CD8-positive, alpha-beta memory T cell (primary cell): ENCODE measurements at regions of chr14 and their contacts with region 1.

Region 1: DNA sequence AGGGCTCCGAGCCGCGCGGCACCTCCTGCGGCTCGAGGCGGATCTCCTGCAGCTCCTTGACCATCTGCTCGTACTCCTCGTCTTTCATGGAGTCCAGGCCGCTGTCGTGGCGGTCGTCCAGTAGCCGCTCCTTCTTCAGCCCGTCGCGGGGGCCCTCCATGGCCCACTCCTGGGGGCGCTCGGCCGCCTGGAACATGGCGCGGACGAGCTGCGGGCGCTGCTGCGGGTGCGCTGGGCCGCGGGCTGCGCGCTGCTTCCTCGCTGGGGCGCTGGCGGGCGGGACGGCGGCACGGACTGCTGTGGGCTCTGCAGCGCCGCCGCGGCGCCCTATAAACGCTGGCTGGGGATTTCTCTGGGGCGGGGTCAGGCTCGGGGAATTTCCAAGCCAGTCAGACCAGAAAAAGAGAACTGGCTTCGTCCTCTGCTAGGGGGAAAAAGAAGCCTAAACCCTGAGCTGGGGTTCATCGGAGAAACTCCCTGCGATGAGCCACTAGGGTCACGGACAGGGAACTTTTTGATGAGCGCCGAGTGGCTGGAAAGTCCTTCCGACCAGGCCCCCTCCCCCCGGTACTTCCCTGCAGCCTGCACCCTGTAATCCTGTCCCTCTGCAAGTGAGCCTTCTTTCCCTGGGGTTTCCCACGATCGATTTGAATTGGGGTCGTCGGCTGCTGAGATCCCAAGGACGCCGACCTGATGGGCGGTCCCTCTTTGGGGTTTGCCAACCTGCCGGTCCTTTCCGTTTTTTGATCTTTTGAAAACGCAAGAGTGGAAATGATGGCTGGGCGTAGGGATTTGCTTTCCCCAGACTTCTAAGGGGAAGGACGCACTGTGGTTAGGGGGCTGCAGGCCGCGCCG is at the start of gene NFKBIA:
- DNase-seq: peak; percentile 86 to 96 (median 95)
- H3K4me3 ChIP-seq: peak within 1 kb of the TSS; percentile 98
- H3K4me3 Mint-ChIP-seq: peak within 1 kb of the TSS; percentile 94 to 99 (median 95)
- H3K27ac ChIP-seq: peak within 1 kb of the TSS; percentile 98
- H3K27ac Mint-ChIP-seq: peak within 1 kb of the TSS; percentile 98 to 100 (median 100)
- H3K4me1 ChIP-seq: peaks cover 51% of the 10 kb centered on the region
- H3K4me1 Mint-ChIP-seq: peaks cover 56 to 66% (median 64%) of the 10 kb centered on the region in 3 donors
- H3K27me3 ChIP-seq: no peaks in the 10 kb centered on the region
- H3K27me3 Mint-ChIP-seq: peaks cover 0 to 15% of the 10 kb centered on the region in 2 donors
- total RNA-seq, gene NFKBIA: 482 to 483 TPM

Region 2: DNA sequence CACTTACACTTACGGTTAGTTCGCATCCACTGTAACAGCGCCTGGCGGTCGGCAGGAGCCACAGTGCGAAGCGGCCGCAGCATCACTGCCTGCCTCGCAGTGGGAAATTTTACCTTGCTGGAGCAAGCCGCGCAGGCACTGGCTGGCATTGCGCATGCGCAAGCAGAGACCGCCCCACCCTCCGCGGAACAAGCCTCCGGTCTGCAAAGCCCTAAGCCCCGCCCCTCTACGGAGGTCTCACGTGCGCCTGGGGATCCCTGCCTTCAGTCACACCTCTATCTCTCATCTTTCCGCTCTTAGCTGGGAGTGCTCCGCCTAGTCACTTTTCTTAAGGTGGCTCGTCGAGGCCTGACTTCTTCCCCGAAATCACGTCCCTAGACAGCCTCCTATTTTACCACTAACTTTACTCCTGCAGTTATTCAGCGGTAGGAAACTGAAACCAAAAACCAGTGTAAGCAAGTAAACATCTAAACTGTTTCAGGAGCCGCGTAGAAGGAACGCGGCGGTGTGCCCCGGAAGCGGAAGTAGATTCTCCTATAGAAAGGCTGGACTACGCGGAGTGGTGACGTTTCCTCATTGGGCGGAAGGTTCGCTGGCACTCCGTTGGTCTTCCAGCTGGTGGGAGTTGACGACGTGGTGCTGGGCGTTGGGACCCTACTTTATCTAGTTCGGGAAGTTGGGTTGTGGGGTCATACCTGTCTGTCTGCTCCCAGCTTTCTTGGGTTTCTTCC is 422.1 kb before region 1 on chr14 and contains the start of gene SRP54:
- CTCF ChIA-PET with region 1: no interaction called
- POLR2A ChIA-PET with region 1: interaction called, 11 read pairs
- DNase-seq: peak; percentile 100
- H3K4me3 ChIP-seq: peak within 1 kb of the TSS; percentile 99
- H3K4me3 Mint-ChIP-seq: no peak within 1 kb of the TSS
- H3K27ac ChIP-seq: peak within 1 kb of the TSS; percentile 98
- H3K27ac Mint-ChIP-seq: no peak within 1 kb of the TSS
- H3K4me1 ChIP-seq: peaks cover 43% of the 10 kb centered on the region
- H3K4me1 Mint-ChIP-seq: peaks cover 11 to 19% (median 14%) of the 10 kb centered on the region in 3 donors
- H3K27me3 ChIP-seq: no peaks in the 10 kb centered on the region
- H3K27me3 Mint-ChIP-seq: no peaks in the 10 kb centered on the region
- total RNA-seq, gene SRP54: 76.2 to 76.5 TPM

Region 3: DNA sequence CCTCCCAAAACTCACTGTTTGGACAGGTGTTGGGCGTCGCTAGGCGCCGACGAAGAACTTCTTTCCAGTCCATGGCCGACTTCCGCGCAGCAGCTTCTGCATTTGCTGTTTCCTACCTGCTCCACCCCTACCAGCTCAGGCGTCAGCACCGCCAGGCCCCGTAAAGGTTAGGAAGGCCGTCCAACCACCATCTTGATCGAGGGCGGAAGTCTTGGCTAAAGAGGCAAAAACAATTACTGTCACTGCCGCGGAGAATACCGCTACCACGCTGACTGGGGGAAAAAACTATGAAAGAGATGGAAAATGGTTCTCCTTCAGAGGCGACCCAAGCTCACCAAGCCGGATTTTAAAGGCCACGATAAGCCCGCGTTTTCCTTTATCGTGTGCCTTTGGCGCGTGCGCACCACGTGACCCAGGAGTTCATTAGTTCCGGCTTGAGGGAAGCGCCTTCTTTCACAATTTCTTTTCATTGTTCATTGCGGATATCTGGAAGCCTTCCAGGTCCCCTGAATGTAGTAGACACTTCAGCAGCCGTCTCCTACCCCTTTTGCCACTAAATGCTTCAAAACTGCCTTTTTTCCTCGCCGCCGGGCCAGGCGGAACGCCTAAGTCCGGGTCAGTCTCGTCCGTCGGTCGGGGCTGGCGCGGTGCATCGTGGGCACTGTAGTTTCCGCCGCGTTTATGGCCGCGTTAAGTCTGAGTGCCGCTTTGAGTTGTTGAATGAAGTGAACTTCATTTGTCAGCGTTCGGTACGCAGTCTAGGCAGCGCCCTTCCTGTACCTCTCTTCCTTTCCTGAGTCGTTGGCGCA is 282.6 kb before region 1 on chr14 and contains the starts of genes PPP2R3C and PRORP:
- CTCF ChIA-PET with region 1: interaction called, 8 read pairs
- POLR2A ChIA-PET with region 1: interaction called, 37 read pairs
- DNase-seq: peak; percentile 87 to 96 (median 91)
- H3K4me3 ChIP-seq: peak within 1 kb of the TSS; percentile 95
- H3K4me3 Mint-ChIP-seq: peak within 1 kb of the TSS; percentile 95 to 99 (median 98)
- H3K27ac ChIP-seq: peak within 1 kb of the TSS; percentile 99
- H3K27ac Mint-ChIP-seq: peak within 1 kb of the TSS; percentile 99 to 100 (median 100)
- H3K4me1 ChIP-seq: peaks cover 44% of the 10 kb centered on the region
- H3K4me1 Mint-ChIP-seq: peaks cover 63 to 90% (median 90%) of the 10 kb centered on the region in 3 donors
- H3K27me3 ChIP-seq: no peaks in the 10 kb centered on the region
- H3K27me3 Mint-ChIP-seq: peaks cover 0 to 4% of the 10 kb centered on the region in 2 donors
- total RNA-seq, gene PPP2R3C: 46.9 to 48.1 TPM
- total RNA-seq, gene PRORP: 36.2 to 39.9 TPM

Region 4: GRCh38 chr14:35229495-35230089 is 175.1 kb before region 1 on chr14:
- CTCF ChIA-PET with region 1: interaction called, 27 read pairs
- POLR2A ChIA-PET with region 1: interaction called, 3 read pairs
- DNase-seq: peak in 2 of 5 donors; percentile 9 to 32
- H3K4me3 ChIP-seq: no peak overlapping the region
- H3K4me3 Mint-ChIP-seq: no peak overlapping the region
- H3K27ac ChIP-seq: no peak overlapping the region
- H3K27ac Mint-ChIP-seq: peak overlapping the region in 4 of 8 donors; percentile 21 to 66 (median 46)
- H3K4me1 ChIP-seq: peaks cover 13% of the 10 kb centered on the region
- H3K4me1 Mint-ChIP-seq: peaks cover 16 to 24% (median 22%) of the 10 kb centered on the region in 3 donors
- H3K27me3 ChIP-seq: no peaks in the 10 kb centered on the region
- H3K27me3 Mint-ChIP-seq: no peaks in the 10 kb centered on the region

Region 5: DNA sequence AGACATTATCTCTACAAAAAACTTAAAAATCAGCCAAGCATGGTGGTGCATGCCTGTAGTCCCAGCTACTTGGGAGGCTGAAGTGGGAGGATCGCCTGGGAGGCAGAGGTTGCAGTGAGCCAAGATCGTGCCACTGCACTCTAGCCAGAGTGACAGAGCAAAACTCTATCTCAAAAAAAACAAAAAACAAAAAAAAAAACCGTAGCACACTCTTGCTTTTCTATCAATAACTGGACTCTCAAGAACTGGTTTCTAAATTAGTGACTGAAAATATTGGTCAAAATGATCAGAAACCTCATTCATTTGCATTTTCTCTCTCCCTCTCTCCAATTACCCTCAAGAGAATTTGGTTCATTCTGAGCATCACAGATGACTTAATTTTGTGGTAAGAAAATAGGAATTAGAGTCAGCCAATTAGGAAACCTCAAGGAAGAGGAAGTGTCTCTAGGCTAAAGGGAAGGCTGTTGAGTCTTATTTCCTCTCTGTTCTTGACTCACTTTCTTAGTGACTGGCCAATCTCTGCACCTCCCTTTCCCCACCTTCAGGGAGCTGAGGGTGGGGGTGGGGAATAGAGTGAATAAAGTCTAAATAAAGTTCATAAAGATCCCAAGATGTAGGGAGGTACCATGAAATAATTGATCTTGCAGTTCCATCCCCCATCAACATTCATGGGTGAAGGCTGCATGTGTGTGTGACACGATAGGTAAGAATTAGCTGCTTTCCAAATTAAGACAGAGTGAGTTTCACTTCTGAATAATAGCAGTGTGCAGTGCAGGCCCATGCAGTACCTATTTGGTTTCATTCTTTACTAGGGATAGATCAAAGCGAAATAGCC is 119.3 kb before region 1 on chr14:
- CTCF ChIA-PET with region 1: interaction called, 16 read pairs
- POLR2A ChIA-PET with region 1: interaction called, 21 read pairs
- DNase-seq: no peak
- H3K4me3 ChIP-seq: peak overlapping the region; percentile 2
- H3K4me3 Mint-ChIP-seq: peak overlapping the region; percentile 16 to 71 (median 57)
- H3K27ac ChIP-seq: peak overlapping the region; percentile 25
- H3K27ac Mint-ChIP-seq: peak overlapping the region; percentile 89 to 97 (median 92)
- H3K4me1 ChIP-seq: peaks cover 35% of the 10 kb centered on the region
- H3K4me1 Mint-ChIP-seq: peaks cover 34 to 43% (median 40%) of the 10 kb centered on the region in 3 donors
- H3K27me3 ChIP-seq: no peaks in the 10 kb centered on the region
- H3K27me3 Mint-ChIP-seq: no peaks in the 10 kb centered on the region

Region 6: GRCh38 chr14:35331605-35332516 is 72.8 kb before region 1 on chr14:
- CTCF ChIA-PET with region 1: interaction called, 6 read pairs
- POLR2A ChIA-PET with region 1: interaction called, 30 read pairs
- DNase-seq: no peak
- H3K4me3 ChIP-seq: no peak overlapping the region
- H3K4me3 Mint-ChIP-seq: peak overlapping the region in 5 of 7 donors; percentile 27 to 58 (median 35)
- H3K27ac ChIP-seq: no peak overlapping the region
- H3K27ac Mint-ChIP-seq: peak overlapping the region; percentile 79 to 95 (median 92)
- H3K4me1 ChIP-seq: peaks cover 22% of the 10 kb centered on the region
- H3K4me1 Mint-ChIP-seq: peaks cover 25 to 30% (median 29%) of the 10 kb centered on the region in 3 donors
- H3K27me3 ChIP-seq: no peaks in the 10 kb centered on the region
- H3K27me3 Mint-ChIP-seq: no peaks in the 10 kb centered on the region

Region 7: GRCh38 chr14:35416108-35416750 is 11.6 kb after region 1 on chr14:
- CTCF ChIA-PET with region 1: interaction called, 58 read pairs
- POLR2A ChIA-PET with region 1: interaction called, 99 read pairs
- DNase-seq: peak; percentile 55 to 79 (median 68)
- H3K4me3 ChIP-seq: peak overlapping the region; percentile 32
- H3K4me3 Mint-ChIP-seq: peak overlapping the region; percentile 41 to 86 (median 80)
- H3K27ac ChIP-seq: no peak overlapping the region
- H3K27ac Mint-ChIP-seq: peak overlapping the region; percentile 86 to 99 (median 96)
- H3K4me1 ChIP-seq: peaks cover 34% of the 10 kb centered on the region
- H3K4me1 Mint-ChIP-seq: peaks cover 49 to 61% (median 58%) of the 10 kb centered on the region in 3 donors
- H3K27me3 ChIP-seq: no peaks in the 10 kb centered on the region
- H3K27me3 Mint-ChIP-seq: peaks cover 0 to 4% of the 10 kb centered on the region in 2 donors

Region 8: GRCh38 chr14:35438910-35439713 is 34.4 kb after region 1 on chr14:
- CTCF ChIA-PET with region 1: no interaction called
- POLR2A ChIA-PET with region 1: no interaction called
- DNase-seq: no peak
- H3K4me3 ChIP-seq: no peak overlapping the region
- H3K4me3 Mint-ChIP-seq: no peak overlapping the region
- H3K27ac ChIP-seq: no peak overlapping the region
- H3K27ac Mint-ChIP-seq: no peak overlapping the region
- H3K4me1 ChIP-seq: no peaks in the 10 kb centered on the region
- H3K4me1 Mint-ChIP-seq: no peaks in the 10 kb centered on the region
- H3K27me3 ChIP-seq: no peaks in the 10 kb centered on the region
- H3K27me3 Mint-ChIP-seq: peaks cover 0 to 5% of the 10 kb centered on the region in 2 donors

Region 9: GRCh38 chr14:35669805-35670204 is 265.1 kb after region 1 on chr14:
- CTCF ChIA-PET with region 1: no interaction called
- POLR2A ChIA-PET with region 1: no interaction called
- DNase-seq: no peak
- H3K4me3 ChIP-seq: no peak overlapping the region
- H3K4me3 Mint-ChIP-seq: no peak overlapping the region
- H3K27ac ChIP-seq: no peak overlapping the region
- H3K27ac Mint-ChIP-seq: peak overlapping the region in 1 of 8 donors; percentile 18
- H3K4me1 ChIP-seq: no peaks in the 10 kb centered on the region
- H3K4me1 Mint-ChIP-seq: peaks cover 0 to 4% (median 0%) of the 10 kb centered on the region in 3 donors
- H3K27me3 ChIP-seq: no peaks in the 10 kb centered on the region
- H3K27me3 Mint-ChIP-seq: no peaks in the 10 kb centered on the region